Dorsolateral prefrontal cortex (tissue), 120 donors: ENCODE measurements at regions of chr1 and their contacts with region 1.

Region 1: DNA sequence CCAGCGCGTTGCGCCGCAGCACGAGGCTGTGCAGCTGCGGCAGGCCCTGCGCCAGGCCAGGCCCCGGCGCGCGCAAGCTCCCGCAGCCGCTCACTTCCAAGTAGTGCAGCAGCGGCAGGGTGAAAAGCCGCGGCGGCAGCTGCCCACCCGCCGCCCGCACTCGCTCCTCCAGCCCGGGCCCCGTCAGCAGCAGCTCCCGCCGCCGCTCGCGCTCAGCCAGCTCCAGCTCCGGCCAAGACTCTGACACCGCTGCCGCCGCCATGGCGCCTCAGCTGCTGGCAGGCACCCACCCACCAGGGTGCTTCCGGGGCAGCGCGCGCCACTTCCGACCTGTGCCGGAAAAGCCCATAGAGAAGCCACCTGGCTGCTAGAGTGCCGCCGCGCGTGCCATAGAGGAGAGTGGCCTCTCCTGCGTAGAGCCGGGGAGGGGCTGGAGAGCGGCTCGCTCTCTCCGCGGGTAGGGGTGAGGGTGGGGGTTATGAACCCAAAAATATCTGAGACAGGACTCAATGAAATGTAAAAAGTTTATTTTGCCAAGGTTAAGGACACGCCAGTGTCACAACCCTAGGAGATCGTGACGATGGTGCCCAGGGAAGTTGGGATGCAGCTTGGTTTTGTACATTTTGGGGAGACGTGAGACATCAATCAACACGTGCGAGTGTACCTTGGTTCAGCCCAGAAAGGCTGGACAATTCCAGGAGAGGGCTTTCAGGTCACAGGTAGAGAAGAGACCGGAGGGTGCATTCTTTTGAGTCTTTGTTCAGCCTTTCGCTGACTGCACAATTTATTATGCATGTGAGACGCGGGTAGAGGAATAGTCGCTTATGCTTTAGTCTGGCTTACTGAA is at the start of gene LRRC47:
- DNase-seq: peak; percentile 93 to 99 (median 96)
- H3K4me3 ChIP-seq: peak within 1 kb of the TSS; percentile 56 to 99 (median 92)
- H3K27ac ChIP-seq: peak within 1 kb of the TSS in 53 of 59 donors; percentile 0 to 89 (median 76)
- H3K27me3 ChIP-seq: no peaks in the 10 kb centered on the region
- CTCF ChIP-seq: peak in 48 of 56 donors; percentile 15 to 70 (median 44)
- total RNA-seq, gene LRRC47: 39.4 to 80.6 (median 62.9) TPM

Region 2: DNA sequence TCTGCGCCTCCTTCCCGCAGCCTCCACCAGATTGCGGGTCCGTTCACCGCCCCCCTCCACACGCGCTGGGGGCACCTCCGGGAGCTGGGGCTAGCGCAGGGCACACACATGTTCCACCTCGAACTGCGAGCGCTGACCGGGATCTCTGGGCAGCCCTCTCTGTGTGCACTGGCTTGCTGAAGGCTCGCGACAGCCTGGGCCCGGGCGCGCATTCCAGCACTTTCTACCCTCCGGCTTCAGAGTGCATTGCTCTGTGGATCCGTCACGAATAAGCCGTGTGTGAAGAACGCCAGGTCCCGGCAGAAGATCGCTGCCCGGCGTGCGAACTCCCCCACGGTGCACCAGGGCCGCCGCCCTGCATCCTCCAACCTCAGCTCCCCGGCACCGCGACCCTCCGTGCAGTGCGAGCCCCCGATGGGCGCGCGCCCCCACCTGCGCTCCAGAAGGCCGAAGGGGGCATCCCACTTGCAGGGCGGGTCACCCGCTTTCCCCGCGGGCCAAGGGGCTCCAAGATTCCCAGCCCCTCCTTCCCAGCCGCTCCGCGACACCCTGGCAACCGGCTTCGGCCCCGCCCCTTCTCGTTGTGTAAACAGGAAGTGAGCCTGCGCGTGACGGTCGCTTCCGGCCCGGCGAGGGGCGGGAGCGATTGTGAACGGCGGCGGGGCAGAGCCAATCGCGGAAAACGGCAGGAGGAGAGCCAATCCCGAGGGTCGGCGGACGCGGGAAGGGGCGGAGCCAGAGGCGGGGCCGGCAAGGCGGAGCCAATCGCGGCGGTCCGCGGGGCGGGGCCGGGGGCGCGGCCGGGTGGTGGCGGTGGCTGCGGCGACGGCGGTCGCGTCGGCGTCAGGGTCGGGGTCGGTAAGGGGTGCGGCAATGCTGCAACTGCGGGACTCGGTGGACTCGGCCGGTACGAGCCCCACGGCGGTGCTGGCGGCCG is 172.0 kb before region 1 on chr1 and contains the start of gene TPRG1L:
- intact Hi-C with region 1: loop called (anchors 5 to 10 kb)
- DNase-seq: peak; percentile 97 to 100 (median 98)
- H3K4me3 ChIP-seq: peak within 1 kb of the TSS; percentile 72 to 100 (median 97)
- H3K27ac ChIP-seq: peak within 1 kb of the TSS in 53 of 59 donors; percentile 36 to 93 (median 81)
- H3K27me3 ChIP-seq: no peaks in the 10 kb centered on the region
- CTCF ChIP-seq: peak in 18 of 56 donors; percentile 7 to 40 (median 20)
- total RNA-seq, gene TPRG1L: 52.0 to 163 (median 121) TPM

Region 3: DNA sequence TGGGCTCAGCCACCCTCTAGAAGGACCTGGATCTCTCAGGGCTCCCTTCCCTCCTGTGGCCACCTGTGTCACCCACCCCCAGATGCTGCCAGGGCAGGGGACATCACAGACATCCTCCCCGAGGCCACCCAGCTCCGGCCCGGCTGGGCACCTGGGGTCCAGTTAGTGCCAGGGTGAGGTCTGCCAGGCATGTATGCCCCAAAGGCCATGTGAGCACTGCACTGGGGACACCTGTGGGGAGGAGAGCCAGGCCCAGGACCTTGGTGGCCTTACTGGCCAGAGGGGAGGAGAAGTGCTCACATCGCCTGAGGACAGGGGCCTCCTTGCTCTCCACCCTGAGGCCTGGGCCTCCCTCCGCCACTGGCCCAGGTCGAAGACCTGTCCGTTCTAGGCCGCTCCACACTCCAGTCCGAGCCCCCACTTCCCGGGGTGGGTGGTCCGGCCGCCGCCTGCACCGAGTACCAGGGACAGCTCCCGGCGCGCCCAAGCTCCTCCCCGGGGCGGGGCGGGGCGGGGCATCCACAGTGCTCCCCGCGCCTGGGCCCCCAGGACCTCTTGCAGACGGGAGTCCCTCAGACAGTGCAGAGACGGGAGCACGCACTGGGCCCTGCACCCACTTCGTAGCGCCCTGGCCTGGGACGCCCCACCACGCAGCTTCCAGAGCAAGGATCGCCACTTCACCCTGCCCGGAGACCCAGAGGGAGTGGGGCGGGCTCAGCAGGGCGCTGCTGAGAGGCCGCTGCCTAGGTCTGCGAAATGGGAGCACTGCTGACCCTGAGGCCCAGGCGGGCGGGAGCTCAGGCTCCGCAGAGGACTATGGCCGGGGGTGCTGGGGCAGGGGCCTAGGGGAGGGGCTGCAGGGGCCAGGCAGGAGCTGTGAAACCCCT is 78.5 kb before region 1 on chr1:
- intact Hi-C with region 1: no loop called
- DNase-seq: no peak
- H3K4me3 ChIP-seq: no peak overlapping the region
- H3K27ac ChIP-seq: peak overlapping the region in 4 of 59 donors; percentile 21 to 91 (median 89)
- H3K27me3 ChIP-seq: peaks cover 0 to 7% (median 0%) of the 10 kb centered on the region in 45 donors
- CTCF ChIP-seq: no peak

Region 4: GRCh38 chr1:3732434-3733093 is 63.9 kb before region 1 on chr1:
- intact Hi-C with region 1: loop called (anchors 5 kb)
- DNase-seq: no peak
- H3K4me3 ChIP-seq: no peak overlapping the region
- H3K27ac ChIP-seq: peak overlapping the region in 2 of 59 donors; percentile 38 to 58
- H3K27me3 ChIP-seq: peaks cover 0 to 13% (median 0%) of the 10 kb centered on the region in 45 donors
- CTCF ChIP-seq: no peak

Region 5: GRCh38 chr1:3809680-3810079 is 13.2 kb after region 1 on chr1:
- intact Hi-C with region 1: no loop called
- DNase-seq: peak in 1 of 10 donors; percentile 6
- H3K4me3 ChIP-seq: no peak overlapping the region
- H3K27ac ChIP-seq: no peak overlapping the region
- H3K27me3 ChIP-seq: no peaks in the 10 kb centered on the region
- CTCF ChIP-seq: no peak

Region 6: GRCh38 chr1:3856908-3857790 is 60.7 kb after region 1 on chr1 and contains the starts of genes CEP104 and DFFB:
- intact Hi-C with region 1: loop called in 1 of 2 experiments (anchors 5 kb)
- DNase-seq: peak; percentile 76 to 95 (median 90)
- H3K4me3 ChIP-seq: peak within 1 kb of the TSS; percentile 66 to 100 (median 94)
- H3K27ac ChIP-seq: peak within 1 kb of the TSS; percentile 19 to 95 (median 81)
- H3K27me3 ChIP-seq: no peaks in the 10 kb centered on the region
- CTCF ChIP-seq: peak in 40 of 56 donors; percentile 11 to 63 (median 39)
- total RNA-seq, gene CEP104: 37.8 to 83.4 (median 59.1) TPM
- total RNA-seq, gene DFFB: 6.3 to 27.1 (median 16.6) TPM